Activated naive CD4-positive, alpha-beta T cell treated with anti-CD3 and anti-CD28 coated beads, Interleukin-2, amount 10 ng/mL, durations not matched to agents 7 days and 5 days (primary cell): ENCODE measurements at regions of chr9 and their contacts with region 1.

Region 1: DNA sequence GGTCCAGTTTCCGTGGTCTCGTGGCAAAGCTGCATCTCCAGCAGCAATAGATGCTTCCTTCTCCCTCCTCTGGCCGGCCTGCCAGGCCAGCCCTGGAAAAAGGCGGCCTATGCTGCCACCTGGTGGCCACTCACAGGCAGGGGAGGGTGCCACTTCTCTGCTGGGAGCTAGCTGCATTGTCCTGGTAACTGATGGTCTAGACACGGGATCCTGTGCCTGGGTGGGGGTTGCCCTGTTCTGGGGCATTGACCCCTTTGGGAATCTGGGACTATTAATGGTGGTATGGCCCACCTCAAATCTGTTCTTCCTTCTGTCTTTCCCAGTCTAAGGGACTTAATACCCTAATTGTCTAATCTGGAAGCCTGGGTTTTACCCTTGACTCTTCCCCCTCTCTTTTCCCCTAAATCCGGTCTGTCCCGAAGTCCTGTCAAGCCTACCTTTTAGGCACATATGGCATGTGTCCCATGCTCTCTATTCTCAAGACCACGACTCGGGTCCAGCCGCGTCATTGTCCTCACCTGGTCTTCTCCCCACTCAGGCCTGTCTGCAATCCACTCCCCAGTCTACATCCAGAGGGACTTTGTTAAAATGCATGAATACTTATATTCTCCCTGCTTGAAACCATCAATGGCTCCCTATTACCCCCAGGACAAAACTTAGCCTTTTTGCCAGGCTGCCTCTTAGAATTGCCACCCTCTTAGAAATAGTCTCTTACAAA is 20.0 kb upstream of the PTGS1 start:
- DNase-seq: peak; percentile 83
- H3K4me3 Mint-ChIP-seq: no peak overlapping the region
- H3K27ac Mint-ChIP-seq: no peak overlapping the region
- H3K4me1 Mint-ChIP-seq: peaks cover 16% of the 10 kb centered on the region
- H3K27me3 Mint-ChIP-seq: peaks cover 49% of the 10 kb centered on the region

Region 2: DNA sequence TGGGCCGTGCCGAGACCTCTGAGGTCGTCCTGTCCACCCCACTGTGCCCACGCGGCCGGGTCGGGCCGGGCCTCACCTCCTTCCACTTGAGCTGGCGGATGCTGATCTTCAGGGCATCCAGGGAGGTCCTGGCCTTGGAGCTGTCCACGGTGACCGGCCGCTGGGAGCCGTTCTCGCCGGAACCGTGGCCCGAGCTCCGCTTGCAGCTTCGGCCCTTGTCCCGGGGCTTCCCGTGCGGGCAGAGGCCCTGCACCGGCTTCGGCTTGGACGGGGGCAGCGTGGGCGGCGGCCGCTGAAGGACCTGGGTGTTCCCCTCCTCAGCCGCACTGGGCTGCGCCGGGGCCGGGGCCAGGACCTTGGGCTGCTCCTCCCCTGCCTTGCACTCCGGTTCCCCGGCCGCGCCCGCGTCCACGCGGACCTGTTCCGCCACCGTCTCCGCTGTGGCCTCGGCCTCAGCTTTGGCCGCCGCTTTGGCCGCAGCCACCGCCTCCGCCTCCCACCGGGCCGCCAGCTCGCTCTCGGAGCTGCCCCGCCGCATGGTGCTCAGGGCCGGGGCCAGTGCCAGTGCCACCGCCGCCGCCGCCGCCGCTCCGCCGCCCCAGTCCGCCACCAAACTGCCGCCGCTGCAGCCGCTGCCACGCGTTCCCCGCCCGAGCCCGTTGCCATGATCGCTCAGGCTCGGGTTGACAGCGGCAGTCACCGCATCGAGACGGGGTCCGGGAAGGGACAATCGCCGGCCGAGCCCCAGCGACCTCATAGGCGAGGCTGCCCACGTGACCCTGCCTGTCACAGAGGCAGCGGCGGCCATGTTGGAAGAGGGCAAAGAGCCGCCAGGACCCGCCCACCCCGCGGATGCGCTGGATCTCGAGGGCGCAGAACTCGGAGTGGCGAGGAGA is 257.9 kb before region 1 on chr9 and contains the start of gene TTLL11:
- CTCF ChIA-PET with region 1: interaction called, 66 read pairs
- DNase-seq: peak; percentile 98
- H3K4me3 Mint-ChIP-seq: peak within 1 kb of the TSS; percentile 83
- H3K27ac Mint-ChIP-seq: peak within 1 kb of the TSS; percentile 43
- H3K4me1 Mint-ChIP-seq: peaks cover 33% of the 10 kb centered on the region
- H3K27me3 Mint-ChIP-seq: peaks cover 25% of the 10 kb centered on the region

Region 3: DNA sequence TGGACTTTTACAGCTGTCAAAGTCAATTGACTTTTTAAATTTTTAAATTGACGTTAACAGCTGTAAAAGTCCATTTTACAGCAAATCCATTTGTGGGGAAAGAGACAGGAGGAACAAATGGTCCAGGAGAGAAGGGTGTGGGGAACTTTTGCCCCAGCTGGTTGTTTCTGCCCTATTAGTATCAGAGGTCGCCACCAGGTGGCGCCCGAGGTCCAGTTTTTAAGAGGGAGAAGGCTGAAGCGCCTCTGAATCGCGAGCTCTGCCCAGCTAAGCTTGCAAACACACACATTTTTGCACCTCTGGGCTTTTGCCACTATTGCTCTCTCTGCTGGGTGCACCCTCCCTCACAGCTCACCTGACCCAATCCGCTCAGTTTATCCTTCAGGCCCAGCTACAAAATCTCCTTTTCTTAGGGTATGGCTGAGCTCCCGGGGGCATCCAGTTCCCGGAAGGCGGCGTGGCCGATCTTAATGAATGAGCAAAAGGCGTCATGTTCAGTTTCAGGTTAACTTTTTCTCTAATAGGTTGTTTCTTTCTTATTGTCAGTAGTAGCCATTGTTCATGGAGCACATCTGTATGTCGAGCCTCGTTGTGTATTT is 251.4 kb before region 1 on chr9:
- CTCF ChIA-PET with region 1: interaction called, 66 read pairs
- DNase-seq: peak; percentile 85
- H3K4me3 Mint-ChIP-seq: peak overlapping the region; percentile 62
- H3K27ac Mint-ChIP-seq: no peak overlapping the region
- H3K4me1 Mint-ChIP-seq: peaks cover 12% of the 10 kb centered on the region
- H3K27me3 Mint-ChIP-seq: peaks cover 31% of the 10 kb centered on the region

Region 4: DNA sequence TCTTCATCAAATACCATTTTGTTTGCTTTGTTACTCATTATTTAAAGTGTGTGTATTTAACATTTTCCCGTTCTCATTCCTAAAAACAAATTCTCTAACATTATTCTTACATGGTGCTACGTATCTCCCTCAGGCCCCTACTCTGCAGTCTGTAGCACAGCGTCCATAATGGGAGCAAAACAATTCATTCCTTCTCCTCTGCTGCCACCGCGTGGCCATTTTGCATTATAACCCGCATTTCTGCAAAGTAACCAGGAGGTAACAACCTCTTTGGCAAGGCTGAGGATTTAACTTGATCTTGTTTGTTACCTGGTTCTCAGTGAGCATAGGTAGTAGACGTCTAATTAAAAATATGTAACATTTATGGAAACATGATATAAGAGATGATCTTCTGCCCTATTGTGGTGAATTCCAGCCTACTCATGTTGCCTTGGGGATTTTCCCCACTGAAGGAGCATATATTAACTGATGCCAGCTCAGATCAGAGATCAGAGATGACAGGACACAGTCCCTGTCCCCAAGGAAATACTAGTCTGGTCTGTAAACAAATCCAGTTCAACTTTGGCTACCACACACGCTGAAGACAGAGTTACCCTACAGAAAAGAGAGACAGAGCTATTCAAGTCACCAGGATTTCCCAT is 459.6 kb after region 1 on chr9:
- CTCF ChIA-PET with region 1: interaction called, 11 read pairs
- DNase-seq: peak; percentile 85
- H3K4me3 Mint-ChIP-seq: no peak overlapping the region
- H3K27ac Mint-ChIP-seq: no peak overlapping the region
- H3K4me1 Mint-ChIP-seq: peaks cover 28% of the 10 kb centered on the region
- H3K27me3 Mint-ChIP-seq: no peaks in the 10 kb centered on the region